Dendritic cell treated with granulocyte-macrophage colony-stimulating factor and Interleukin-4, amounts not matched to agents 40 ng/mL and 50 ng/mL, for 4 days (primary cell): ENCODE measurements at regions of chr3 and their contacts with region 1.

Region 1: GRCh38 chr3:122383771-122384697 is at the start of gene FAM162A:
- H3K4me3 Mint-ChIP-seq: peak within 1 kb of the TSS; percentile 92
- H3K27ac Mint-ChIP-seq: peak within 1 kb of the TSS; percentile 94
- H3K4me1 Mint-ChIP-seq: peaks cover 38% of the 10 kb centered on the region
- H3K27me3 Mint-ChIP-seq: no peaks in the 10 kb centered on the region

Region 2: GRCh38 chr3:122415720-122416654 is 32.0 kb after region 1 on chr3 and contains the start of gene WDR5B:
- intact Hi-C with region 1: loop called (anchors 5 kb)
- H3K4me3 Mint-ChIP-seq: peak within 1 kb of the TSS; percentile 94
- H3K27ac Mint-ChIP-seq: peak within 1 kb of the TSS; percentile 94
- H3K4me1 Mint-ChIP-seq: peaks cover 47% of the 10 kb centered on the region
- H3K27me3 Mint-ChIP-seq: no peaks in the 10 kb centered on the region

Region 3: DNA sequence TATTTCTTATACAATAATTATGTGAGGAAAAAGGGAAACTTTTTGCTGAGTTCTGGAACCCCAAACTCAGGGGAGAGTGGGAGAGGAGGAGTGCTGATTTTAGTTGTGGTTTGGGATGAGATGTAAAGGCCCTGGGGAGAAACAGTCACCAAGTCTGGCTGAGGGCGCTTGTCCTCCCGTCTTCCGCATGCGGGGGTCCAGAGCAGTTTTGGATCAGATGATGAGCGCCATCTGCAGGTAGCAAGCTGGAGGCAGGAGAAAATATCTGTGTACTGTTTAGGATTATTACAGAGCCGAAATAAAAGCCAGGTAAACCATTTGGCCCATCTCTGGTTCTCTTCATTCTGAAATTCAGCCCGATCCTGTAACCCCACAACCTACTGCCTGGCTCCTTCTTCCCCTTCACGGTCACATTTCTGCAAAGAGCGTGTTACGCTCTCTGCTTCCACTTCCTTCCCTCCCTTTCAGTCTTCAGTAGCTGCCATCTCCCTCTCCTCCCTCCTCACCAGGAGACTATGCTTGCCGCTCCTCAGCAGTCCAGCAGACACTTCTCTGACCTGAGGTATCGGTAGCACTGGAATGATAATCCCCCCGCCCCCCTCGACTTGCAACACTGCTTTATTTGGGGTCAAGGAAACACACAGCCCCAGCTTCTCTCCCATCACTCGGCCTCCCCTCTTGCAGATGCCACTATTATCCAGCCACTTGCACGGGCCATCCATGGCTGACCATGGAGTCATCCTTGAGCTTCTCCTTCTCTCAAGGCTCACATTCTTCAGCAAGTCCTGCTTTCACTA is 295.2 kb after region 1 on chr3:
- intact Hi-C with region 1: loop called (anchors 10 kb)
- H3K4me3 Mint-ChIP-seq: peak overlapping the region; percentile 94
- H3K27ac Mint-ChIP-seq: peak overlapping the region; percentile 94
- H3K4me1 Mint-ChIP-seq: peaks cover 57% of the 10 kb centered on the region
- H3K27me3 Mint-ChIP-seq: no peaks in the 10 kb centered on the region